ENCODE measurements at regions of chr6 and their contacts with region 1.

Region 1: GRCh38 chr6:126176282-126176681 is 163.6 kb upstream of the CENPW start:
- DNase-seq: peak; percentile 18
- ATAC-seq: peak; percentile 71
- H3K4me3 ChIP-seq: no peak overlapping the region
- H3K27ac ChIP-seq: no peak overlapping the region
- H3K4me1 ChIP-seq: peaks cover 4% of the 10 kb centered on the region
- H3K27me3 ChIP-seq: no peaks in the 10 kb centered on the region
- CTCF ChIP-seq: peak; percentile 37
- EP300 ChIP-seq: no peak
- POLR2A ChIP-seq: no peak
- RAD21 ChIP-seq: no peak

Region 2: GRCh38 chr6:126127659-126128058 is 48.6 kb before region 1 on chr6:
- CTCF ChIA-PET with region 1: no interaction called
- POLR2A ChIA-PET with region 1: no interaction called
- in situ Hi-C with region 1: no loop called
- intact Hi-C with region 1: no loop called
- DNase-seq: no peak
- ATAC-seq: no peak; the same call in 2 of the 3 replicates
- H3K4me3 ChIP-seq: no peak overlapping the region
- H3K27ac ChIP-seq: no peak overlapping the region
- H3K4me1 ChIP-seq: no peaks in the 10 kb centered on the region
- H3K27me3 ChIP-seq: no peaks in the 10 kb centered on the region
- CTCF ChIP-seq: peak; percentile 44
- EP300 ChIP-seq: no peak
- POLR2A ChIP-seq: no peak
- RAD21 ChIP-seq: no peak

Region 3: DNA sequence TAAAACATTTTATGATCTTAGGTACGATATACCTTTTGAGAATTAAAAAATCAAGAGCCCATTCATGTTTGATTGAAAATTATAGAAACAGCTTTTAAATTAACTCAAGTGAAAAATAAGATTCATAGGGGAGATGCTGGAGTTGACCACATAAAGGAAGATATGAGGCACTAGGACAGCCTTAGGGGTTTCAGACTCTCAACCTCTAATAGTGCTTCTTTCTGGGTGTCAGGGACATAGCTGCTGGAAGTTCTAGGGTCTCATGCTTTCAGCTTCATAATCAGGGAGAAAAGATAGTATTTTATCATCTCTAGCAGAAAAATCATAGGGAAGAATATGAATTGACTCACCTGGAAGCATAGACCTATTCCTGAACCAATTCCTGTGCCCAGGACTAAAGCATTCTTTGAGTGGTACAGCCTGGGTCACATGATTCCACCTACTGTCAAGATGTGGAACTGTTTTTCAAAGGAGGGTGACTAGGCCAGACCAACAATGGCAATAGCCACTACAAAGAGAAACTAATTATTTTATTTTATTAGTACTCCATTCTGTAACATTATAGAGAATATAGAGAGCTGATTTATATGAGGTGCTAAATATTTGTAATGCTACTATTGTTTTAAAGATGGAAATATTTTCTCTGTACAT is 135.9 kb after region 1 on chr6:
- CTCF ChIA-PET with region 1: no interaction called
- POLR2A ChIA-PET with region 1: no interaction called
- in situ Hi-C with region 1: no loop called
- intact Hi-C with region 1: loop called (anchors 5 kb)
- DNase-seq: peak; percentile 44
- ATAC-seq: peak; percentile 100
- H3K4me3 ChIP-seq: no peak overlapping the region
- H3K27ac ChIP-seq: no peak overlapping the region
- H3K4me1 ChIP-seq: no peaks in the 10 kb centered on the region
- H3K27me3 ChIP-seq: no peaks in the 10 kb centered on the region
- CTCF ChIP-seq: peak; percentile 54
- EP300 ChIP-seq: no peak
- POLR2A ChIP-seq: no peak
- RAD21 ChIP-seq: 0 out of 2 replicates have a peak, but pooled peaks have one; percentile 12